Cardiac septum (tissue), 1 donor: ENCODE measurements at regions of chr11 and their contacts with region 1.

Region 1: GRCh38 chr11:112655371-112655770 is 305.8 kb upstream of the NCAM1 start:
- DNase-seq: peak; percentile 86

Region 2: DNA sequence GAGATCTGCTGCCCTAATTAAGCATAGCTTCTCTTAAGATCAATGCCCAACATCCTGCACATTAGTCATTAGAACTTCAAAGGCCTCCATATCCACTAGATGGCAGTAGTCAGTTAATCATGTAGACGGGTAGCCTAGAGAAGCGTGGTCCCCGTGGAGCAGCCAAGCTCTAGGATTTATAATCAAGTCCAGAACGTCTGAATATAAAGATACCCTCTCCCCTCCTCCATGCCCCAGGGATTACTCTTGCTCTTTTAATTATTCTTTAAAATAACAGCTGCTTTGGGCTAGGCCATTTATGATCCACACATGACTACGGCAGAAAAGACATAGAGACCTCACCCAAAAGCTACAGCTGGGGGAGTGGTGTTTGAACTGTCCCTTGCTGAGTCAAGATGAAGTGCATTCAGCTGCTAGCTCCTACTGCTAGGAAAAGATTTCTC is 67.1 kb before region 1 on chr11:
- intact Hi-C with region 1: loop called (anchors 5 kb)
- DNase-seq: no peak

Region 3: DNA sequence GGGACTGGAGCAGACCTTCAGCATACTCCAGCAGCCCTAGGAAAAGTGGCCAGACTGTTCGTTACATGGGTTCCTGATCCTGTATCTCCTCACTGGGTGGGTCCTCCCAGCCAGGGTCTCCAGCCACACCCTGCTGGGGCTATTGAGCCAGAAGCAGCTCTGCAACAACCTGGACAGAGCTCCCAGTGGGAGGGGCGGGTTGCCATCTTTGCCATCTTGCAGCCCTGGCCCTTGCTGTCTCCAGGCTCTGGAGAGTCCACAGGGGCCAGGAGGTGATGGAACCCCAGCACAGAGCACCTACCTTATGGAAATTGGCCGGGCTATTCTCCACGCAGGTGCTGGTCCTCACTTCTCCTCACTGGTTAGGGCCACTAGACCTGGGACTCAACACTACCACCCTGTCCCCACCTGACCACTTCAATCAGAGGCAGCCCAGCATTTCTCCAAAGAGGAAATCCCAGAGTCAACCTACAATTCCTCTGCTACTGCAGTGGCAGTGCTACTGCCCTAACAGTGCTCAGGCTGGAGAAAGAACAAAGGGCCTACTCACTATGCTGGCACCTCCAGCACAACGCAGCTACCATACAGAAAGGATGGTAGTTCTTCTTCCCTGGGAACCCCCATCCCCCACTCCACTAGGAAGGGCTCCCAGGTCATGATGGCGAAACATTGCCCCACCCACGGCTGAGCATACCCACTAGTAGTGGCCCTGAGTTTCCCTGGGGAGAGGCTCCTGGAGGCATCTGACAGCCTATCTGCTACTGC is 15.6 kb after region 1 on chr11:
- intact Hi-C with region 1: no loop called
- DNase-seq: no peak

Region 4: DNA sequence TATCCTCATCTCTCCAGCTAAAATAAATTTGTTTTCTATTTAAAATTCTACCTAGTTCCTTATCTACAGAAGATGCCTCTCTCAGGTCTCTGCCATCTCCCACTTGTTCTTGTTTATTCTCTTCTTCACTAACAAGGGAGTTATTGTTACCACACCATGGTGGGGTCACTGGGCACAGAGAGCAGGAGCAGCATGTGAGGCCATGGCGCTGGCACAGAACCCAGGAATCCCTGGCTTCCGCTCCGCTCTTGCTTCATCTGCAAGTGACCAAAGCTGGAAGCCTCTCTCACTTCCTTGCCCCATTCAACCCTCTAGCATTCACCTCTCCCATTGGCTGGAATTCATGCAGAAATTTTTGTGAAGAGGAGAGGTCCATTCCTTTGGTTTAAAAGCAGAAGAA is 115.1 kb after region 1 on chr11:
- intact Hi-C with region 1: loop called (anchors 5 kb)
- DNase-seq: no peak

Region 5: GRCh38 chr11:112837162-112837826 is 181.9 kb after region 1 on chr11:
- intact Hi-C with region 1: loop called (anchors 5 kb)
- DNase-seq: no peak

Region 6: GRCh38 chr11:113113801-113114706 is 458.7 kb after region 1 on chr11:
- intact Hi-C with region 1: loop called (anchors 10 kb)
- DNase-seq: no peak